GM12878 (cell line): ENCODE measurements at regions of chr12 and their contacts with region 1.

Region 1: DNA sequence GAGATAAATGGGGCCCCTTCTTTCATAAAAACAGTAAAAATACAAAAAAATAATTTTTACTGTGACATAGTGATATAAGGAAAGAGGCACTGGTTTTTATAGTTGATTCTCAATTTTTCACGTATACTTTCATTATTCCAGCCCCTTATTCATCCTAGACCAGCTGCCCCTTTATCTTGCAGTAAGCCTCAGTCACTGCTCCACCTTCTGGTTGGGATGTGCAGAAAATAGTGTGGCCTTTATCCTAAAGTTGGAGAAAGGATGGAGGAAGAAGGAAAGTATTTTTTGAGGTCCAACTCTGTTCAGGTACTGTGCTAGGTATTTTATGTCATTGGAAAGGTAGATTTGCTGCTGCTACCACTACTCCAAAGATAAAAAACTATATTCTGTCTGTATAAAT is 172.7 kb downstream of the ANO6 start:
- DNase-seq: no peak
- ATAC-seq: no peak; the same call in 2 of the 3 replicates
- H3K4me3 ChIP-seq: no peak overlapping the region
- H3K27ac ChIP-seq: no peak overlapping the region
- H3K4me1 ChIP-seq: no peaks in the 10 kb centered on the region
- H3K27me3 ChIP-seq: no peaks in the 10 kb centered on the region
- CTCF ChIP-seq: peak; percentile 25 to 50 (median 35); a peak in 4 of 6 replicates
- EP300 ChIP-seq: no peak
- POLR2A ChIP-seq: no peak
- RAD21 ChIP-seq: peak; percentile 50

Region 2: DNA sequence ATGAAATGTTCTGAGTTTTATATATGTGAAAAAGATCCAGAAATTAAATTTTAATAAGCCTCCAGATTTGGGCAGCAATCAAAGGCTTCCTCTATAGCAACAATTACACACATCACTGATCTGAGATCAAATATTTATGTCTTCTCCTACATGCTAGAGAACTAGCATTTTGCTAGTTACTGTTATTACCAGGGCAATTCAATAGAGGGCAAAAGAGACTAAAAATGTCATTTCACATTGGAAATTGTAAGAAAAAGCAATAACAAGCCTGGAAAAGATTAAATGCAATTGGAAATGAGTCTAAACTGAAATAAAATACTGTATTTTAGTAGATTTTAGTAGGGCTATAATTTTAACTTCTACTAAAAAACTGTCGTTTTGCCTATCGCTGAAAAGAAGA is 205.3 kb before region 1 on chr12:
- CTCF ChIA-PET with region 1: interaction called, 13 read pairs
- POLR2A ChIA-PET with region 1: no interaction called
- RAD21 ChIA-PET with region 1: interaction called, 8 read pairs
- SMC1A ChIA-PET with region 1: interaction called, 7 read pairs
- in situ Hi-C with region 1: no loop called
- intact Hi-C with region 1: no loop called
- DNase-seq: no peak
- ATAC-seq: 0 out of 3 replicates have a peak, but pooled peaks have one; percentile 28
- H3K4me3 ChIP-seq: no peak overlapping the region
- H3K27ac ChIP-seq: no peak overlapping the region
- H3K4me1 ChIP-seq: no peaks in the 10 kb centered on the region
- H3K27me3 ChIP-seq: no peaks in the 10 kb centered on the region
- CTCF ChIP-seq: peak in 2 of 3 experiments; percentile 3 to 30; a peak in 3 of 6 replicates
- EP300 ChIP-seq: no peak
- POLR2A ChIP-seq: no peak
- RAD21 ChIP-seq: peak; percentile 47

Region 3: GRCh38 chr12:45191239-45191638 is 197.3 kb before region 1 on chr12:
- CTCF ChIA-PET with region 1: interaction called, 10 read pairs
- POLR2A ChIA-PET with region 1: no interaction called
- RAD21 ChIA-PET with region 1: no interaction called
- SMC1A ChIA-PET with region 1: no interaction called
- in situ Hi-C with region 1: no loop called
- intact Hi-C with region 1: no loop called
- DNase-seq: no peak
- ATAC-seq: 0 out of 3 replicates have a peak, but pooled peaks have one; percentile 27
- H3K4me3 ChIP-seq: no peak overlapping the region
- H3K27ac ChIP-seq: no peak overlapping the region
- H3K4me1 ChIP-seq: no peaks in the 10 kb centered on the region
- H3K27me3 ChIP-seq: no peaks in the 10 kb centered on the region
- CTCF ChIP-seq: no peak
- EP300 ChIP-seq: no peak
- POLR2A ChIP-seq: no peak
- RAD21 ChIP-seq: no peak